ENCODE measurements at regions of chr5 and their contacts with region 1.

Region 1: DNA sequence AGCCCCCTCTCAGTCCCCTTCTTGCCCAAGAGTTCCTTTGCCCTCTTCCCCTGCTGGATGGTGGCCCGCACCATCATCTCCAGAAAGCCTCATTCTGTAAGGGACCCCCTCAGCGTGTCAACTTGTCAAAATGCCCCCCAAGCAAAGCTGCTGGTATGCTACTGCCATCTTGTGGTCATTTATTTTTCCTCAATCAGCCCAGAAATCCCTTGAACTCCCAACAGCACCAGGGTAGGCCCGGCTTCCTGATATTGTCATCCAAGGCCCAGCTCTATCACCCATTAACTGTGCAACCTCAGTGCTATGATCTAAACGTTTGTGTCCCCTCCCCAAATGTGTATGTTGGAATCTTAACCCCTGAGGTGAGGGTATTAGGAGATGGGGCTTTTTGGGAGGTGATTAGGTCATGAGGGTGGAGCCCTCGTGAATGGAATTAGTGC is 53.2 kb upstream of the FBXW11 start:
- DNase-seq: no peak
- ATAC-seq: peak; percentile 53
- H3K4me3 Mint-ChIP-seq: no peak overlapping the region
- H3K27ac Mint-ChIP-seq: no peak overlapping the region
- H3K4me1 Mint-ChIP-seq: peaks cover 9% of the 10 kb centered on the region
- H3K27me3 Mint-ChIP-seq: no peaks in the 10 kb centered on the region
- CTCF ChIP-seq: peak; percentile 60

Region 2: DNA sequence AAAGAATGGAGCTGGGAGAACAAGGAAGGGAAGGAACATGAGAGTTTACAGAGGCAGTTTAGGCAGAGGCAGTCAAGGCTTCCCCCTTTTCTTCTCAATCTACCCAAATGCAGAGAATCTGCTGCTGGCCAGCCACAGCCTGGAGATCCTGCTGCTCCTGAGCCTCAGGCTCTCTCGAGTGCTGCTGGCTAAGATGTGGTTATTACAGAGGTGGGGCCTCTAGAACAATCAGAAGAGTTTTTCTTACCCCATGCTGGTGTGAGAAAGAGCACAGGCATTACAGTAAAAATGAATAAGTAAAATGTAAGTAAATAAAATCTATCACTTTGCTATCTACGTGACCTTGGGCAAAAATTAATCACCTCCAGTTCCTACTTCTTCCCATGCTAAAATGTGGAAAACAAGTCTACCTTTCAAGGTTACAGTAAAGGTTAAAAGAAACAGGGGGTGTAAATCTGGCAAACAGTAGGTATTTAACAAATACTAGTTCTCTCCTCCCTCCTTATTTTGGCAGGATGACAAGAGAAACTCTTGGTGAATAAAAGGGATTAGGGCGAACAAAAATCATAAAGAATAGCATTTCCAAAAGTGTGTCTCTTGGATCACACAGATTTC is 84.3 kb before region 1 on chr5:
- CTCF ChIA-PET with region 1: no interaction called
- POLR2A ChIA-PET with region 1: no interaction called
- intact Hi-C with region 1: no loop called
- DNase-seq: no peak
- ATAC-seq: no peak
- H3K4me3 Mint-ChIP-seq: no peak overlapping the region
- H3K27ac Mint-ChIP-seq: peak overlapping the region; percentile 48
- H3K4me1 Mint-ChIP-seq: peaks cover 56% of the 10 kb centered on the region
- H3K27me3 Mint-ChIP-seq: no peaks in the 10 kb centered on the region
- CTCF ChIP-seq: no peak

Region 3: DNA sequence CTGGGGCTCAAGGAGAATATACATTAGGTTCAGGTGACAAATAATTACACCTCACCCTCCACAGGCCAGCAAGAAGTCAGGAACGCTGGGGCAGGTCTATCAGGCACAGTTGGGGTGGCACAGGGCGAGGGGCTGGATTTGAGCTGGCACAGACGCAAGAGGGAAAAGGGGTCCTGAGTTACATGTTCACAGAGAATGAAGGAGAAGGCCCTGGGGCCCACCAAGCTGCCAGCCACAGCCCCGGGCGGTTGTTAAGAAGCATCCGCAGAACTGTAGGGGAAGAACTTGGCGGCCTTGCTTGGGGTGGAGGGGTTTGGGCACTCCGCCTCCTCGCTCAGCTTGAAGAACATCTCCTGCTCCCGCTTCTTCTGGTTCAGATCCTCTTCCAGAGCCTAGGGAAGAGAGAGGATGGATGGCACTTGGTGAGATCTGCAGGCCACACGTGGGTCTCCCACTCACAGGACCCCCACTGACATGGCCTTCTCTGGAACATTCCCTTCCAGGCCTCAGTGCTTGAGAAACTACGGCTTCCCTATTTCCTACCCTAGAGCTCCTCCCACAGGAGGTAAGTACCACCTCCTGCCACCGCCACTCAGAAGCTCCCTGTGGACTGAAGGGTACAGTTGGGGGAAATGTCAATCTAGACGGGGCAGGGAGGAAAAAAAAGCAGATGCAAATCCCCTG is 14.9 kb before region 1 on chr5:
- CTCF ChIA-PET with region 1: interaction called, 12 read pairs
- POLR2A ChIA-PET with region 1: interaction called, 3 read pairs
- intact Hi-C with region 1: no loop called
- DNase-seq: no peak
- ATAC-seq: no peak
- H3K4me3 Mint-ChIP-seq: no peak overlapping the region
- H3K27ac Mint-ChIP-seq: peak overlapping the region; percentile 67
- H3K4me1 Mint-ChIP-seq: peaks cover 20% of the 10 kb centered on the region
- H3K27me3 Mint-ChIP-seq: no peaks in the 10 kb centered on the region
- CTCF ChIP-seq: no peak

Region 4: DNA sequence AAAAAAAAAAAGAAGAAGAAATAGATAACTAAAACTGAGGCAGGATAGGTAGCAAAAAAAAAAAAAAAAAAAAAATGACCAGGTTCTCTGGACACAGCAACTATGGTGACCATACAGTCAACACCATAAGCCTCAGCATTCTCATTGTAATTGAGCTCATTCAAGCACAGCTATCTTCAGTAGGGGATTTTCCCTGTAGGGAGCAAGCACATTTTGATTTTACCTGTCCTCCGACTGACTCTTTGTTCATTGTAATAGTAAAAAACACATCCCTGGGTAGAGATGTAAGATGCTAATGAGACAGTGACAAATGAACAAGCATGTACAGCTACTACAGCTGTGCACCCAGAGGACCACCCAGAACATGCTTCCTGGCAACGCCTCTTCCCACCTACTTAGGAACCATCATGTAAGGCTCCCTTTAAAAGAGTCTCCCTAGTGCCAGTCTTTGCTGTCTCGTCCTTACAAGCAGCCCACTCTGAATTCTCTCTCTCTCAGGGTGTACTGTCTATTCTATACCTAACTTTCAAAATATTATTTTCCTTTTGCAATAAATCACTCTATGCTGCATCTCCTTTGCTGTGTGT is 11.7 kb after region 1 on chr5:
- CTCF ChIA-PET with region 1: interaction called, 20 read pairs
- POLR2A ChIA-PET with region 1: no interaction called
- intact Hi-C with region 1: no loop called
- DNase-seq: no peak
- ATAC-seq: peak; percentile 15
- H3K4me3 Mint-ChIP-seq: no peak overlapping the region
- H3K27ac Mint-ChIP-seq: peak overlapping the region; percentile 73
- H3K4me1 Mint-ChIP-seq: peaks cover 39% of the 10 kb centered on the region
- H3K27me3 Mint-ChIP-seq: no peaks in the 10 kb centered on the region
- CTCF ChIP-seq: no peak

Region 5: DNA sequence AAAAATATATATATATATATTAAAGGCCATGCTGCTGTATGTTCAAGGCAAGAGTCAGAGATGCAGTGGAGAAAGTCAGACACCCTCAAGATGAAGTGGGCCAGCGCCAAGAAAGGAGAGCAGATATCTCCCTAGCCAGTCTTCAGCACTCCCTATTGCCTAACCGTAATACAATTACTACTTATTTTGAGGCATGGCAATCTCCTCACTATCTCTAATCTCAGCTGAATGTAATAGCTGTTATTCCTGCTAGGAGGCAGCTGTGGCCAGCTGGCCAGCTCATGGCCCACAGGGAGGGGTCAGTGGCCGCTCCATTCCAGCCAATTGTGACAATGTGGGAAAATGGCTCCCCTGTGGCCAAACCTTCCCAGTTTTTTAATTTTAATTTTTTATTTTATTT is 34.3 kb after region 1 on chr5:
- CTCF ChIA-PET with region 1: no interaction called
- POLR2A ChIA-PET with region 1: no interaction called
- intact Hi-C with region 1: no loop called
- DNase-seq: no peak
- ATAC-seq: no peak
- H3K4me3 Mint-ChIP-seq: no peak overlapping the region
- H3K27ac Mint-ChIP-seq: no peak overlapping the region
- H3K4me1 Mint-ChIP-seq: peaks cover 3% of the 10 kb centered on the region
- H3K27me3 Mint-ChIP-seq: no peaks in the 10 kb centered on the region
- CTCF ChIP-seq: no peak

Region 6: GRCh38 chr5:172150514-172151425 is 91.1 kb after region 1 on chr5:
- CTCF ChIA-PET with region 1: no interaction called
- POLR2A ChIA-PET with region 1: no interaction called
- intact Hi-C with region 1: no loop called
- DNase-seq: peak; percentile 56
- ATAC-seq: peak; percentile 70
- H3K4me3 Mint-ChIP-seq: peak overlapping the region; percentile 63
- H3K27ac Mint-ChIP-seq: peak overlapping the region; percentile 91
- H3K4me1 Mint-ChIP-seq: peaks cover 68% of the 10 kb centered on the region
- H3K27me3 Mint-ChIP-seq: no peaks in the 10 kb centered on the region
- CTCF ChIP-seq: no peak